ENCODE measurements at regions of chr1 and their contacts with region 1.

Region 1: DNA sequence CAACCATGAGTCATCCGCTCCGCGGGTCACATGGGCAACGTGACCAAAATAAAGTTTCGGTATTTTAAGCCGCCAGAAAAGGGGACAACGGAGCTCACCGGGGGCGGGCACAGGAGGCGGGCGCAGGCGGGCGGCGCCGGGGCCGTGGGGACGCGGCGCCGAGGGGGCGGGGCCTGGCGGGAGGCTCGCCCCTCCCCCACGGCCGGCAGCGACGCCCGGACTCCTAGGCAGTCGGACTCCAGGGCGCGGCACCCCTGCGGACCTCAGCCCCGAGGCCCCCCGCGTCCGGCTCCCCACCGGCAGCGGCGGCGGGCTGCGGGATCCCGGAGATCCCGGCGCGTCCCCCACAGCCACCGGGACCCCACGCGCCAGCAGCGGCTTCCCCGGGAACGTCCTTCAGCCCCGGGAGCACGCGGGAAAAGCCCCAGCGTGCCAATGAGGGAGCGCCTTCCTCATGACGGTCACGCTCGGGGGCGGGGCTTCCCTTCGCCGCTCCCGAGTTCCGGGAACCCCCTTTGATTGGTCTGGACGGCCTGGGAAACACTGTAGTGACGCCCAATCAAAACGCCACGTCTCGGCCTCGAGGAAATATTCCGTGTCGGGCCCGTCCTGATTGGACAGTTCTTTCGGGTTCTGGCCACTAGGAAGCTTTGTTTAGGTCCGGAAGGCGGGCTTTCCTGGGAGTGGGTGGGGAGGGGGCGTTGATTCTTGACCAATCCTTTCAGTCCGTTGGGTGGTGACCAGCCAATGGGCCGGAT is 515 bp upstream of the CAMTA1 start:
- DNase-seq: peak; percentile 100
- H3K4me3 Mint-ChIP-seq: peak overlapping the region; percentile 75
- H3K27ac Mint-ChIP-seq: peak overlapping the region; percentile 78
- H3K4me1 Mint-ChIP-seq: peaks cover 40% of the 10 kb centered on the region
- H3K27me3 Mint-ChIP-seq: no peaks in the 10 kb centered on the region

Region 2: GRCh38 chr1:5992026-5992813 is 792.5 kb before region 1 on chr1 and contains the start of gene NPHP4:
- CTCF ChIA-PET with region 1: no interaction called
- POLR2A ChIA-PET with region 1: no interaction called
- intact Hi-C with region 1: loop called (anchors 10 kb)
- DNase-seq: peak; percentile 100
- H3K4me3 Mint-ChIP-seq: peak within 1 kb of the TSS; percentile 86
- H3K27ac Mint-ChIP-seq: peak within 1 kb of the TSS; percentile 88
- H3K4me1 Mint-ChIP-seq: peaks cover 21% of the 10 kb centered on the region
- H3K27me3 Mint-ChIP-seq: no peaks in the 10 kb centered on the region
- total RNA-seq, gene NPHP4: 14.0 to 14.6 TPM

Region 3: GRCh38 chr1:6026095-6026809 is 758.5 kb before region 1 on chr1:
- CTCF ChIA-PET with region 1: no interaction called
- POLR2A ChIA-PET with region 1: no interaction called
- intact Hi-C with region 1: loop called (anchors 10 kb)
- DNase-seq: peak; percentile 97
- H3K4me3 Mint-ChIP-seq: peak overlapping the region; percentile 96
- H3K27ac Mint-ChIP-seq: peak overlapping the region; percentile 97
- H3K4me1 Mint-ChIP-seq: peaks cover 43% of the 10 kb centered on the region
- H3K27me3 Mint-ChIP-seq: no peaks in the 10 kb centered on the region

Region 4: GRCh38 chr1:6613361-6614018 is 171.2 kb before region 1 on chr1 and contains the start of gene PHF13:
- CTCF ChIA-PET with region 1: no interaction called
- POLR2A ChIA-PET with region 1: no interaction called
- intact Hi-C with region 1: loop called (anchors 1 kb)
- DNase-seq: peak; percentile 100
- H3K4me3 Mint-ChIP-seq: peak within 1 kb of the TSS; percentile 83
- H3K27ac Mint-ChIP-seq: peak within 1 kb of the TSS; percentile 74
- H3K4me1 Mint-ChIP-seq: peaks cover 23% of the 10 kb centered on the region
- H3K27me3 Mint-ChIP-seq: no peaks in the 10 kb centered on the region
- total RNA-seq, gene PHF13: 16.8 to 16.9 TPM

Region 5: GRCh38 chr1:6743189-6744101 is 41.3 kb before region 1 on chr1:
- CTCF ChIA-PET with region 1: no interaction called
- POLR2A ChIA-PET with region 1: interaction called, 17 read pairs
- intact Hi-C with region 1: loop called (anchors 2 kb)
- DNase-seq: peak; percentile 34
- H3K4me3 Mint-ChIP-seq: no peak overlapping the region
- H3K27ac Mint-ChIP-seq: no peak overlapping the region
- H3K4me1 Mint-ChIP-seq: peaks cover 12% of the 10 kb centered on the region
- H3K27me3 Mint-ChIP-seq: peaks cover 25% of the 10 kb centered on the region

Region 6: DNA sequence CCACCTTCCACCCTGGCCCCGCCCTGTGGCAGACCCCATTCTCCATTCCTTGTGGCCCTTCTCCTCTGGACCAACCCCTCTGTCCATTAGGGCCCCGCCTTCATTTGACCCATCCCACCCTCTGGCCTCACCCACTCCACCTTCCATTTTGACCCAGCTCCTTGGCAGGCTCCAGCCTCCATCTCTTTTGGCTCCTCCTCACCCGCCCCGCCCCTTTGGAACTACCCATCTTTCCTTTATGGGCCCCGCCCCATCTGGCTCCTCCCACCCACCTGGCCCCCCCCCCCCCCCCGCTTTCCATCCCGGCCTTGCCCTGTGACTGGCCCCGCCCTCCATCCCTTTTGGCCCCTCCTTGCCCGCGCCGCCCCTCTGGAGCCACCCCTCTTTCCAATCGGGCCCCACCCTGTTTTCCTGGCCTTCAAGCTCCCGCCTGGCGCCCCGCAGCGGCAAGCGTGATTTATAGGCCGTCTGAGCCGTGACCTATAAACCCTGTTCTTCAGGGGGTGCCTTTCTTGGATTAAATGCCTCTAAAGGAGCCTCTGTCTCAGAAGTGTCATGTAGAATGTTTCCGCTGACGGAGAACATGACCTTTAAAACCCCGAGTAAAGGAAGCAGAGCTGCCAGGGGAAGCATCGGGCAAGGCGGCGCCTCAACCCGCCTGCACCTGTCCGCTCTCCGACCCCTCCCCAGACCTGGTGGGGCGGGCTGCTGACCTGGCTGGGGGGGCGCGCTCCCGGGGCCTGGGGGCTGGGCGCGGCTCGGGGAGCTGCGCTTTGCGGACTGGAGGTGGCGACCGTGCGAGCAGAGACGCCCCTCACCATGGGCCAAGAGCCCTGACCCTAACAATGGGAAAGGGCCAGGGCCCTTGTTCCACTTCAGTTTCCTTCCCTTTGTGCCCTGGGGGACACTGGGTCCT is 178.5 kb after region 1 on chr1:
- CTCF ChIA-PET with region 1: interaction called, 3 read pairs
- POLR2A ChIA-PET with region 1: no interaction called
- intact Hi-C with region 1: loop called (anchors 5 kb)
- DNase-seq: peak; percentile 83
- H3K4me3 Mint-ChIP-seq: peak overlapping the region; percentile 55
- H3K27ac Mint-ChIP-seq: no peak overlapping the region
- H3K4me1 Mint-ChIP-seq: peaks cover 12% of the 10 kb centered on the region
- H3K27me3 Mint-ChIP-seq: peaks cover 44% of the 10 kb centered on the region

Region 7: DNA sequence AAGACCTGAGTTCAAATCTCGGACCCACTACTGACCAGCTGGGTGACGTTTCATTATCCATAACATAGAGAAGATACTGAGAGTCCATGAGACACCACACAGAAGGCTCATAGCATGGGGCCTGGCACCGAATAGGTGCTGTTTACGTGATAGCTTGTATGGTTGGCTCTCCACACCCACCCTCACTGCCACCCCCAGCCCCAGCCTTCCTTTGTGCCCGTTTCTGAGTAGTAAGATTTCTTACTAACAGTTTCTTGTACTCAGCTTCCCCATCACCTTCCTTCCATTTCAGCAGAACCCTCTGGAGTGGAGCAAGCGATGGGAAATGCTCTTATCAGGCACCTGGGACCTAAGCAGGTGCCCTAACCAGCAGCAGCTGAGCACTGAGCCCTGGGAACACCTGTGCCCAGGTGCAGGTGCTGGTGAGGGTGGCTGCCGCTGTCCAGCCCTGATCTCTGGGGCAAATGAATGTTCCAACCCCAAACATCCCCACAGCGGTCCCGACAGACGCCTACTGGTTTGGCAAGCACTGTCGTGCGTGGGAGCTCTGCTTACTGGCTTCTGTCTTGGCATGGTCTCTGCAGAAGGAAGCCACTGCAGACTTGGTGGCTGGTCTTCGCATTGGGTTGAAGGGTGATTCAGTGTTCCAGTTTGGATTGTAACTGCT is 225.9 kb after region 1 on chr1:
- CTCF ChIA-PET with region 1: no interaction called
- POLR2A ChIA-PET with region 1: no interaction called
- intact Hi-C with region 1: no loop called
- DNase-seq: no peak
- H3K4me3 Mint-ChIP-seq: no peak overlapping the region
- H3K27ac Mint-ChIP-seq: no peak overlapping the region
- H3K4me1 Mint-ChIP-seq: no peaks in the 10 kb centered on the region
- H3K27me3 Mint-ChIP-seq: no peaks in the 10 kb centered on the region

Region 8: DNA sequence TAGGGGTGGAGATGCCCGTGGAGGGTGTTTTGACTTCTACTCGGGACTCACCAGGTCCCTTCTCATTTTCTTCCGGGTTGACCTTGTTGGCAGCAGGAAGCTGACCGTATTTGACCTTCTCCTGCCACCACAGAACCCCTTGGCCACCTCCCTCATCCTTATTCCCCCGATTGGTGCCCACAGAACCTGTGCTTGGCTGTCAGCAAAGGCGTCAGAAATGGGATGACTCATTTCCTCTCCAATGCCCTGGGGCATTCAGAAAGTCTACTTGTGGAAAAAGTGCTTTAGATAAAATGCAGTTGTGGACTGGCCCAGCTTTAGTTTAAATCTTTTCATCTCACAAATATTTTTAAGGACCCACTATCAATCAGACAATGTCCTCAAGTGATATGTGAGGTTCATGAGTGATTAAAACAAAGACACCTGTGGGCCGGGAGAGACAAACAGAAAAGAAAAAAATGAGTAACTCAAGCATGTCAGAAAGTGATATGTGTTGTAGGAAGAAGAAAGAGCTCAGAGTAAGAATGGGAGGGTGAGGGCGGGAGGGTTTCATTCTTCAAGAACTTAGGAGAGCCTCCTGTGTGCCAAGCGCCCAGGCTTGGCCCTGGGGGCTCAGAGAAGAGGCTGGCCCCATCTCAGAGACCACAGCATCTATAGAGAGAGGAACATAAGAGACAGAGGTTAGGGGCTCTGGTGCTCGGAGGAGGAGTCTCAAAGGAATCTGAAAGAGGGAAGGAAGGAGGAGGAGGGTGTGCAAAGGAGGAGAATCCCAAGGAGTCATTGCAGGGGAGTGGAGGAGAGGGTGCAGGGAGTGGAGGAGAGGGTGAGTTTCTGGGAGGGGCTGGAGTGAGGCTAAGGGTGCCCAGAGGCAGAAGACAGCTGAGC is 764.8 kb after region 1 on chr1:
- CTCF ChIA-PET with region 1: no interaction called
- POLR2A ChIA-PET with region 1: no interaction called
- intact Hi-C with region 1: loop called (anchors 5 kb)
- DNase-seq: peak; percentile 78
- H3K4me3 Mint-ChIP-seq: peak overlapping the region; percentile 40
- H3K27ac Mint-ChIP-seq: peak overlapping the region; percentile 89
- H3K4me1 Mint-ChIP-seq: peaks cover 12% of the 10 kb centered on the region
- H3K27me3 Mint-ChIP-seq: peaks cover 13% of the 10 kb centered on the region